MCF 10A (cell line): ENCODE measurements at regions of chr2 and their contacts with region 1.

Region 1: GRCh38 chr2:230793572-230794359 is 71.0 kb upstream of the ITM2C start:
- DNase-seq: peak; percentile 99
- H3K4me3 Mint-ChIP-seq: peak overlapping the region; percentile 66
- H3K27ac Mint-ChIP-seq: no peak overlapping the region
- H3K4me1 Mint-ChIP-seq: peaks cover 20% of the 10 kb centered on the region
- H3K27me3 Mint-ChIP-seq: no peaks in the 10 kb centered on the region
- CTCF ChIP-seq: no peak

Region 2: DNA sequence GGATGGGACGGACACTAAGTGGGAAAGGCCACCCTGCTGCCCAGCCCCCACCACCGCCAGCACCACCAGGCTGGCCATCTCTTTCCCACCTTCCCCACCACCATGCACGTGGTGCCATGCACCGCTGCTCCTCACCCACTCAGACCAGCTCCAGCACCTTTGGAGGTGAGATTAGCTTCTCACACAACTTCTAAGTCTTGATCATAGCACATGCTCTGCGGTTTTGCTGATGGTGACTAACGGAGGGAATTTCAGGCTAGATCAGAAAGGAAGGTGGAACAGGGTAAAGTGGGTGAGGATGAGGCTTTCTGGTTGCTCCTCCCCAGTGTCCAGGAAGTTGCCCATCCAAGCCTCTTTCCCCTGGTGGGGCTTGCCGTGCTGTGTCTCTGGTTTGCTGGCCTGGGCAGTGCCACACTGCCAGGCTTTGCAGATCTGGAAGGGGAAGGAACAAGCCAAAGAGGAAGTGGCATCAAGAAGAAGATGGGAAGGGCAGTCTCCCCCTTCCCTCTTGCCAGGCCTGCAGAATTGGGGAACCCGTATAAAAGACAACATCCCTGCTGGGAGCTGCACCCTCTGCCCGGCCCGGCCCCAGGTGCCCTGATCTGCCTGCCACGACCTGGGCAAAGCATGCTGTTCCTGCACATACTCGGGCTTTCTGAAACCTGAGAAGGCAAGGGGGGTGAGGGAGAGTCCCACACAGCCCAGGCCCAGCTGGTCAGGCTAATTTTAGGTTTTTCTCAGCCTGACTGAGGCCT is 125.4 kb before region 1 on chr2:
- CTCF ChIA-PET with region 1: interaction called, 8 read pairs
- POLR2A ChIA-PET with region 1: interaction called, 23 read pairs
- intact Hi-C with region 1: no loop called
- DNase-seq: peak; percentile 90
- H3K4me3 Mint-ChIP-seq: peak overlapping the region; percentile 16
- H3K27ac Mint-ChIP-seq: peak overlapping the region; percentile 70
- H3K4me1 Mint-ChIP-seq: peaks cover 50% of the 10 kb centered on the region
- H3K27me3 Mint-ChIP-seq: no peaks in the 10 kb centered on the region
- CTCF ChIP-seq: no peak

Region 3: DNA sequence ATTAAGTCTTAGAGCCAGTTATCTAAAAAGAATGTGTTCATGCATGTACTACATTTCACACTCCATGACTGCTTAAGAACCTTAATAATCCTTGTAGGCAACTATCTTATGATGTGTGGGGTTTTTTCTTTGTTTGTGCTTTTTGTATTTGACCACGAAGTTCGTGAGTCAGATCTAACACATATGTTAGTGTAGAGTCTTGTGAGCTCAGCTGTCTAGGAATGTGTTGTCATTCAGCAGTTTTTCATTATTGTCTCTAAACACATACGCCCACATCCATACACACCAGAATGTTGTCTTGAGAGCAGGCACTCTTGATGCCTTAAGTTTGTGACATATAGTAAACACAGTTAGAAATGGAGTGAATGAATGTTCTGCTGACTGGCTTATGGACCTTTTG is 42.7 kb before region 1 on chr2:
- CTCF ChIA-PET with region 1: interaction called, 5 read pairs
- POLR2A ChIA-PET with region 1: interaction called, 12 read pairs
- intact Hi-C with region 1: loop called (anchors 5 kb)
- DNase-seq: peak; percentile 48
- H3K4me3 Mint-ChIP-seq: no peak overlapping the region
- H3K27ac Mint-ChIP-seq: peak overlapping the region; percentile 31
- H3K4me1 Mint-ChIP-seq: peaks cover 35% of the 10 kb centered on the region
- H3K27me3 Mint-ChIP-seq: no peaks in the 10 kb centered on the region
- CTCF ChIP-seq: no peak

Region 4: GRCh38 chr2:230774348-230774951 is 19.3 kb before region 1 on chr2:
- CTCF ChIA-PET with region 1: interaction called, 6 read pairs
- POLR2A ChIA-PET with region 1: interaction called, 193 read pairs
- intact Hi-C with region 1: loop called (anchors 1 kb)
- DNase-seq: peak; percentile 75
- H3K4me3 Mint-ChIP-seq: peak overlapping the region; percentile 13
- H3K27ac Mint-ChIP-seq: peak overlapping the region; percentile 87
- H3K4me1 Mint-ChIP-seq: peaks cover 47% of the 10 kb centered on the region
- H3K27me3 Mint-ChIP-seq: no peaks in the 10 kb centered on the region
- CTCF ChIP-seq: no peak